Mammary epithelial cell (primary cell): ENCODE measurements at regions of chr3 and their contacts with region 1.

Region 1: DNA sequence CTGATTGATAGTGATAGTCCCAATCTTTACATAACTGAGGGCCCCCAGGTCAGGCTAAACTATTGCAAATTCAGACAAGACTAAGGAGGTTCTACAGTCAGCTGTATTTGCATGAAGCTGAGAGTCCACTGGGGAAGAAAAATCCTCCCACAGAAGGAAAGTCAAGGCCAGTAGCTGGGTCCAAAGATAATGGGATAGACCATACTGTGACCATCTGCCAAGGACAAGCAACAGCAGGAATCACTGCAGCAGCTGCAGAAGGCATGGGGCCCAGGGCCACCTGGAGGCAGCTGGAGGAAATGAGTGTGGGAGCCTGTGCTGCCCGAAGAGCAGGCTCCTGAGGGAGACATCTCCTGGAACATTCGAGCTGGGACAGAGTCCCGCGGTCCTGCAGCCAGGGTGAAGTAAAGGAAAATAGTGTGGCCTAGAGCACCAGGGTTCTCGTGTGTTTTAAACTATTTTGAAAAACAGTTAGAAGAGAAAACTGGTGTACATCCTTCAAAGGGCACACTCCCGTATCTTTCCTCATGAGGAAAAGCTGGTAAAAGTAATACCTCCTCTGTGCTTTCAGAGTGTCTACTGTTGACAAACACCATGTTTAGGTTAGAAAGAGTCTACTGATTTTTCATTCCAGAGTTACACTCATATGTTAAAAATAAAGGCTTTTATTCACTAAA is 13.2 kb upstream of the TMEM212 start:
- DNase-seq: peak; percentile 83
- H3K4me3 ChIP-seq: no peak overlapping the region
- H3K27ac ChIP-seq: no peak overlapping the region
- H3K4me1 ChIP-seq: peaks cover 4% of the 10 kb centered on the region
- H3K27me3 ChIP-seq: no peaks in the 10 kb centered on the region
- CTCF ChIP-seq: peak; percentile 74 to 97

Region 2: DNA sequence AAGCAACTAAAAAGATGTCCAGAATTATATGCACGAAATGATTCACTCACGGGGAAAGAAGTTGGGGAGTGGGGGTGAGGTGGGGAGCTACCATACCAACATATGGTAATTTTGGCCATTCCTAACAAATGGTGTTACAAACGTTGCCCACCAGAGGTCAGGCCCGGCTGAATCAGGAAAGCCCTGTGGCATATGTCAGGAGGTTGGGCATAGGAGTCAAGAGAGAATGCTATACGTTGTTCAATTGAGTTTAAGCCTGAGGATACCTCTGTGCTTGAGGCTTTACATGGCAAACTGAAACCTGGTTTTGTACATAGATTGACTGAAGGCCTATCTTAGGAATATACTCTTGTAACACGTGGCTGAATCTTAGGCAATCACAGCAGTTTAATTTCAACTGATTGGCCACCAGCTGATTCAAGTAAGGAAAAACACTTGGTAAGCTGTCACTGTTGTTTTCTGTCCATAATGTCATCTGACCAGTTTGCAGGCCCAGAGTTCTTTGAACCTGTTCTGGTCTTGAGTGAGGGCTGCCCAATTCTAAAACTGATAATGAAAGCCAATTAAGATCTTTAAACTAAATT is 780.0 kb before region 1 on chr3:
- CTCF ChIA-PET with region 1: interaction called, 3 read pairs
- dilution Hi-C with region 1: no loop called
- in situ Hi-C with region 1: no loop called
- intact Hi-C with region 1: loop called (anchors 5 kb)
- DNase-seq: peak; percentile 49
- H3K4me3 ChIP-seq: no peak overlapping the region
- H3K27ac ChIP-seq: no peak overlapping the region
- H3K4me1 ChIP-seq: no peaks in the 10 kb centered on the region
- H3K27me3 ChIP-seq: no peaks in the 10 kb centered on the region
- CTCF ChIP-seq: peak; percentile 58 to 81

Region 3: GRCh38 chr3:171566803-171567422 is 263.1 kb before region 1 on chr3:
- CTCF ChIA-PET with region 1: no interaction called
- dilution Hi-C with region 1: no loop called
- in situ Hi-C with region 1: no loop called
- intact Hi-C with region 1: loop called (anchors 2 kb)
- DNase-seq: peak; percentile 25
- H3K4me3 ChIP-seq: no peak overlapping the region
- H3K27ac ChIP-seq: no peak overlapping the region
- H3K4me1 ChIP-seq: no peaks in the 10 kb centered on the region
- H3K27me3 ChIP-seq: no peaks in the 10 kb centered on the region
- CTCF ChIP-seq: peak; percentile 65 to 74

Region 4: GRCh38 chr3:171703756-171704401 is 126.1 kb before region 1 on chr3:
- CTCF ChIA-PET with region 1: no interaction called
- dilution Hi-C with region 1: no loop called
- in situ Hi-C with region 1: loop called in 1 of 2 experiments (anchors 5 kb)
- intact Hi-C with region 1: loop called (anchors 1 kb)
- DNase-seq: peak; percentile 49
- H3K4me3 ChIP-seq: no peak overlapping the region
- H3K27ac ChIP-seq: no peak overlapping the region
- H3K4me1 ChIP-seq: no peaks in the 10 kb centered on the region
- H3K27me3 ChIP-seq: no peaks in the 10 kb centered on the region
- CTCF ChIP-seq: peak; percentile 71 to 80

Region 5: DNA sequence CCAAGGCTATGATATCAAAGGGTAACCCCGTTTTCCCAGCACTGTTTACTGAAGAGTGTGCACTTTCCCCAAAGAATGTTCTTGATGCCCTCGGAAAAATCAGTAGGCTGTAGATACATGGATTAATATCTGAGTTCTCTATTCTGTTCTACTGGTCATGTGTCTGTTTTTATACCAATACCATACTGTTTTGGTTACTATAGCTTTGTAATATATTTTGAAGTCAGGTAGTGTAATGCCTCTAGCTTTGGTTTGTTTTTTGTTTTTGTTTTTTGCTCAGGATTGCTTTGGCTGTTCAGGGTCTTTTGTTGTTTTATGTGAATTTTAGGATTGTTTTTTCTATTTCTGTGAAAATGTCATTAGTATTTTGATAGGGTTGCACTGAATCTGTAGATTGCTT is 114.8 kb before region 1 on chr3:
- CTCF ChIA-PET with region 1: no interaction called
- dilution Hi-C with region 1: no loop called
- in situ Hi-C with region 1: no loop called
- intact Hi-C with region 1: no loop called
- DNase-seq: no peak
- H3K4me3 ChIP-seq: no peak overlapping the region
- H3K27ac ChIP-seq: no peak overlapping the region
- H3K4me1 ChIP-seq: peaks cover 10% of the 10 kb centered on the region
- H3K27me3 ChIP-seq: no peaks in the 10 kb centered on the region
- CTCF ChIP-seq: no peak

Region 6: DNA sequence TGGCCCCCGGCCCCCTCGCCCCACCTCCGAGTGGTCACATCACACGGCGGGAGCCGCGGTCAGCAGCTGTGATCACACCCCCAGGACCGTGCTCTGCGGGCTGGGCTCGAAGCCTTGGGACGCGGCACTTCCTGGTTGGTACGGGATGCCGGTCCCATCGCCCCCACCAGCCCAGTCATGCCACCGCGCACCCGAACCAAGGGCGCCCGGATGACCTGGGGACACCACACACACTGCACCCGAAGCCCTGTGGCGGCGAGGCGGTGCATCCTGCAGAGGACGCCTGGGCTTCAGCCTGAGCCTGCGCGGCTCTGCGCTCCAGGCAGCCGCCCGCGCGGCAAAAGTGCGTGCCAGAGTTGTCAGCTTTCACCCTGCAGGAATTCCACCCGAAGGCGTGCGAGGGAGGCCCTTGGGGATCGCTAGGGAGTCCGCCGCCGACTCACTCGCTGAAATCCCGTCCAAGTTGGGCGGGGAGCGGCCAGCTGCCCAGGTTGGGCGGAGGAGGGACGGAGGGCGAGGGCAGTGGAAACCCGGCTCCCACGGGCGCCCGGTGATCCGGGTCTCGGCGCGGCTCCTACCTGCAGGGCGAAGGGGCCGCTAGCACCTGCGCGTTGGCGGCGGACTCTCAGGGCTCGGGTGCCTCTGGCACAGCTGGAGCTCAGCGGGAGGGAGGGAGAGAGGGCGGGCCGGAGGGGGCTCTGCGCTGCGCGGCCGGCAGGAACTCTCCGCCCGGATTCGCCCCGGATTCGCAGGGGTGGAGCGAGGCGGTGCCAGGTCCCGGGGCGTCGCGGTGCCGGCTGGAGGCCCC is 20.0 kb before region 1 on chr3 and contains the start of gene PLD1:
- CTCF ChIA-PET with region 1: interaction called, 7 read pairs
- dilution Hi-C with region 1: no loop called
- in situ Hi-C with region 1: no loop called
- intact Hi-C with region 1: loop called (anchors 1 kb)
- DNase-seq: peak; percentile 94
- H3K4me3 ChIP-seq: peak within 1 kb of the TSS; percentile 51 to 86 (median 82)
- H3K27ac ChIP-seq: peak within 1 kb of the TSS; percentile 92
- H3K4me1 ChIP-seq: peaks cover 39% of the 10 kb centered on the region
- H3K27me3 ChIP-seq: no peaks in the 10 kb centered on the region
- CTCF ChIP-seq: peak in 1 of 2 donors; percentile 6
- total RNA-seq, gene PLD1: 13.9 to 19.0 TPM

Region 7: GRCh38 chr3:171867981-171868380 is 38.0 kb after region 1 on chr3:
- CTCF ChIA-PET with region 1: no interaction called
- dilution Hi-C with region 1: no loop called
- in situ Hi-C with region 1: no loop called
- intact Hi-C with region 1: no loop called
- DNase-seq: no peak
- H3K4me3 ChIP-seq: no peak overlapping the region
- H3K27ac ChIP-seq: no peak overlapping the region
- H3K4me1 ChIP-seq: no peaks in the 10 kb centered on the region
- H3K27me3 ChIP-seq: no peaks in the 10 kb centered on the region
- CTCF ChIP-seq: peak; percentile 18 to 31

Region 8: DNA sequence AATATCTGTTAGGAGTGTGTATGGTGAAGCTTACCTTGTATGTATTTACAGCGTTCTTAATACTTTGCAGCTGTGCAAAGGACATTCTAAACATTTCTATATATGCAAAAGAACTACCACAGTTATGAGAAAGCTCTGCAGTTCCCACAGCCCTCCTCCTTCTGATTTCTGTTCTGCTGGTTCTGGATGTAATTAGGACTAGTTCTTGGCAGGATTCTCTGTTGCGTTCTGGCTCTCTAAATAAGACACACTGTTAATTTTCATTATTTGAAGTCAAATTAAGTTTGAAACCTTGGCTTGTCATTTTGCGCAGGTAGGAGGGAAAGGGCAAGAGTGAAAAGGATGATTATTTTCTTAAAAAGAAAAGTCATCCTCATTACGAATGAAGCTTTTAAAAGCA is 285.8 kb after region 1 on chr3:
- CTCF ChIA-PET with region 1: no interaction called
- dilution Hi-C with region 1: no loop called
- in situ Hi-C with region 1: no loop called
- intact Hi-C with region 1: no loop called
- DNase-seq: no peak
- H3K4me3 ChIP-seq: no peak overlapping the region
- H3K27ac ChIP-seq: no peak overlapping the region
- H3K4me1 ChIP-seq: peaks cover 4% of the 10 kb centered on the region
- H3K27me3 ChIP-seq: no peaks in the 10 kb centered on the region
- CTCF ChIP-seq: no peak

Region 9: GRCh38 chr3:172177046-172177445 is 347.1 kb after region 1 on chr3:
- CTCF ChIA-PET with region 1: no interaction called
- dilution Hi-C with region 1: no loop called
- in situ Hi-C with region 1: no loop called
- intact Hi-C with region 1: no loop called
- DNase-seq: no peak
- H3K4me3 ChIP-seq: no peak overlapping the region
- H3K27ac ChIP-seq: no peak overlapping the region
- H3K4me1 ChIP-seq: peaks cover 8% of the 10 kb centered on the region
- H3K27me3 ChIP-seq: no peaks in the 10 kb centered on the region
- CTCF ChIP-seq: no peak

Region 10: GRCh38 chr3:172476347-172476746 is 646.4 kb after region 1 on chr3:
- CTCF ChIA-PET with region 1: no interaction called
- dilution Hi-C with region 1: no loop called
- in situ Hi-C with region 1: no loop called
- intact Hi-C with region 1: loop called (anchors 5 kb)
- DNase-seq: no peak
- H3K4me3 ChIP-seq: peak overlapping the region in 2 of 3 experiments; percentile 46 to 52
- H3K27ac ChIP-seq: peak overlapping the region; percentile 68
- H3K4me1 ChIP-seq: peaks cover 7% of the 10 kb centered on the region
- H3K27me3 ChIP-seq: no peaks in the 10 kb centered on the region
- CTCF ChIP-seq: no peak